Activated naive CD4-positive, alpha-beta T cell treated with anti-CD3 and anti-CD28 coated beads for 36 hours (primary cell): ENCODE measurements at regions of chr4 and their contacts with region 1.

Region 1: GRCh38 chr4:63831590-63832155 is 577.6 kb downstream of the TECRL start:
- DNase-seq: no peak
- H3K4me3 Mint-ChIP-seq: no peak overlapping the region
- H3K27ac Mint-ChIP-seq: no peak overlapping the region
- H3K4me1 Mint-ChIP-seq: no peaks in the 10 kb centered on the region
- H3K27me3 Mint-ChIP-seq: no peaks in the 10 kb centered on the region

Region 2: GRCh38 chr4:63589796-63590195 is 241.9 kb before region 1 on chr4:
- CTCF ChIA-PET with region 1: no interaction called
- intact Hi-C with region 1: no loop called
- DNase-seq: no peak
- H3K4me3 Mint-ChIP-seq: no peak overlapping the region
- H3K27ac Mint-ChIP-seq: no peak overlapping the region
- H3K4me1 Mint-ChIP-seq: no peaks in the 10 kb centered on the region
- H3K27me3 Mint-ChIP-seq: no peaks in the 10 kb centered on the region

Region 3: DNA sequence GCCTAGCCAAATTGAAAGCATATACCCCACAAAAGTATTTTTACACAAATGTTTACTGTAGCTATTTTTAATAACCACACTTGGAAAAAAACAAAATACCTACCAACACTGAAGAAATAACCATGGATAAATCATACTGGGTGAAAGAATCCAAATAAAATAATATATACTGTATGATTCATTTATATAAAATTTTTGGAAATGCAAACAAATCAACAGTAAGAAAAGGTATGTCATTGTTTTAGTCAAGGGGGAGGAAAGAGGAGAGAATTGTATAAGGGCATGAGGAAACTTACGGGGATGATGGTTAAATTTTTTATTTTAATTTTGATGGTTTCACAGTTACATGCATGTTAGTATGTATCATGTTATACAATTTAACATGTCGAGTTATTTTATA is 19.8 kb after region 1 on chr4:
- CTCF ChIA-PET with region 1: no interaction called
- intact Hi-C with region 1: loop called (anchors 2 kb)
- DNase-seq: no peak
- H3K4me3 Mint-ChIP-seq: no peak overlapping the region
- H3K27ac Mint-ChIP-seq: no peak overlapping the region
- H3K4me1 Mint-ChIP-seq: no peaks in the 10 kb centered on the region
- H3K27me3 Mint-ChIP-seq: no peaks in the 10 kb centered on the region